Activated CD4-positive, alpha-beta memory T cell treated with anti-CD3 and anti-CD28 coated beads for 36 hours (primary cell): ENCODE measurements at regions of chr1 and their contacts with region 1.

Region 1: DNA sequence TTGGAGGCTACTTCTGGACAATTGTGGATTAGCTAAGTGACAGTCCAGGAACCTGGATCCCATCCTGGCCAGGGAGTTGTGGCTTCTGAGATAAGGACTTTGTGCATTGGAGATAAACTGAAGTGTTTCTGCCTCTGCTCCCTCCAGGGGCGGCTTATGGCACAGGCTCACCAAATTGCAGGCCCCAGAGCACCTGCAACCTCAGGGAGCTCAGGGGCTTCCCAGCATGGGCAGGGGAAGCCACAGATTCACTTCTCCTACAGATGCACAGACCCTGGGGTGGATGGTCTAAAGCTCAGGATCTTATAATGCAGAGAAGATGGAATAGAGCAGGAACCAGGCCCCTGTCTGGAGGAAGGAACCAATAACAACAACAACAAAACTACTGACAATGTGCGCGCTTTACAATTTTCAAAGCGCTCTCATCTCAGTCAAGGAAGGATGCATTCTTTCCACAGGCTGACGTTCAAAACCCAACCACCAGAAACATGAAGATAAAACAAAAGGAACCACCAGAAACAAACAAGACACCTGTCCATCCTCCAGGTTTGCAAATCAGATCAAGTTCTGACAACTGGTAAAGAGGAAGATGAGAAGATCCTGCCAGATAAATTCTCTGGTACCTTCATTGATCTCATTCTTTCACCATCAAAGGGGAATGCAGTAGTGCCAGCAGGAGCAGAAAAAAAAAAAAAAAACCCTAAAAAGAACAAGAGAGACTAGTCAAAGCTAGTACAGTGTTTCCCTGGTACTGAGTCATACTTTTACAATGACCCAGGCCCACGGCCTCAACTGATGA is 121.0 kb upstream of the IRF2BP2 start:
- DNase-seq: peak; percentile 78
- H3K4me3 Mint-ChIP-seq: peak overlapping the region; percentile 40
- H3K27ac Mint-ChIP-seq: peak overlapping the region; percentile 99
- H3K4me1 Mint-ChIP-seq: peaks cover 77% of the 10 kb centered on the region
- H3K27me3 Mint-ChIP-seq: no peaks in the 10 kb centered on the region

Region 2: GRCh38 chr1:234149217-234149616 is 581.8 kb before region 1 on chr1:
- CTCF ChIA-PET with region 1: no interaction called
- POLR2A ChIA-PET with region 1: no interaction called
- intact Hi-C with region 1: no loop called
- DNase-seq: no peak
- H3K4me3 Mint-ChIP-seq: no peak overlapping the region
- H3K27ac Mint-ChIP-seq: no peak overlapping the region
- H3K4me1 Mint-ChIP-seq: peaks cover 25% of the 10 kb centered on the region
- H3K27me3 Mint-ChIP-seq: peaks cover 31% of the 10 kb centered on the region

Region 3: DNA sequence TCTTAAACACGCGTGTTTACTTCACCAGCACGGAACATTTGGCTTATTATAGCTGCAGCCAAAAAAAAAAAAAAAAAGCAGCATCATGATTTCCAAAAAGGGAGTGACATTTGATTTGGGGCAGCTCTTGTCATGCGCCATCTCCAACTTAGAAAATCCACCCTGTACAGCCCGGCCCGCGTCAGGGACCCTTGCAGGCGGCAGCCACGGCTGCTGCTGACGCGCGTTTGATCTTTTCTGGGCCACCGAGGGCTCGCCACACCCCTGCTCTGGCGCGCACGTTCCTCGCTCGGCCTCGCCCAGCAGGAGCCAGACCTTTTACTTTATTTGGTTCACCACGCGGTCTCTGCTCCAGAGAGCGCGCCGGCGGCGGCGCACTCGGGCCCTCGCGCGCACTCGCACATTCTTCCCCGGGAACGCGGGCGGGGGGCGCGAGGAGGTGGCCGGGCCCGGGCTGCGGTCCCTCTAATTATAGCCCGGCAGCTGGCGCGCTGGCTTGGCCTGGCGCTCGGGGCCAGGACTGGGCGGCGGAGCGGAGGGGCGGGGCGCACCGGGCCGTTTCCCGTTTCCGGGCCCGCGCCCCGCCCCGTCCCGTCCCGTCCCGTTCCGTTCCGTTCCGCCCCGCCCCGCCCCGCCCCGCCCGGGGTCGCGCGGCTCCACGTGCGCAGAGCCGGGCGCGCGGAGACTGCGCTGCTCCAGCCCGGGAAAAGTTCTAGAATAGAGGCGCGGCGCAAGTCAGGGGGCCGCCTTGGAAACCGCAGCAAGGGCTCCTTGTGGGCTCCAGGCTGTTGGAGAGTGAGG is 131.2 kb before region 1 on chr1:
- CTCF ChIA-PET with region 1: interaction called, 5 read pairs
- POLR2A ChIA-PET with region 1: interaction called, 34 read pairs
- intact Hi-C with region 1: loop called (anchors 2 kb)
- DNase-seq: peak; percentile 82
- H3K4me3 Mint-ChIP-seq: peak overlapping the region; percentile 85
- H3K27ac Mint-ChIP-seq: peak overlapping the region; percentile 100
- H3K4me1 Mint-ChIP-seq: peaks cover 54% of the 10 kb centered on the region
- H3K27me3 Mint-ChIP-seq: no peaks in the 10 kb centered on the region

Region 4: GRCh38 chr1:234881893-234882771 is 151.2 kb after region 1 on chr1:
- CTCF ChIA-PET with region 1: no interaction called
- POLR2A ChIA-PET with region 1: no interaction called
- intact Hi-C with region 1: loop called (anchors 1 kb)
- DNase-seq: peak; percentile 72
- H3K4me3 Mint-ChIP-seq: no peak overlapping the region
- H3K27ac Mint-ChIP-seq: peak overlapping the region; percentile 59
- H3K4me1 Mint-ChIP-seq: peaks cover 40% of the 10 kb centered on the region
- H3K27me3 Mint-ChIP-seq: no peaks in the 10 kb centered on the region